GM12878 (cell line): ENCODE measurements at regions of chrX and their contacts with region 1.

Region 1: DNA sequence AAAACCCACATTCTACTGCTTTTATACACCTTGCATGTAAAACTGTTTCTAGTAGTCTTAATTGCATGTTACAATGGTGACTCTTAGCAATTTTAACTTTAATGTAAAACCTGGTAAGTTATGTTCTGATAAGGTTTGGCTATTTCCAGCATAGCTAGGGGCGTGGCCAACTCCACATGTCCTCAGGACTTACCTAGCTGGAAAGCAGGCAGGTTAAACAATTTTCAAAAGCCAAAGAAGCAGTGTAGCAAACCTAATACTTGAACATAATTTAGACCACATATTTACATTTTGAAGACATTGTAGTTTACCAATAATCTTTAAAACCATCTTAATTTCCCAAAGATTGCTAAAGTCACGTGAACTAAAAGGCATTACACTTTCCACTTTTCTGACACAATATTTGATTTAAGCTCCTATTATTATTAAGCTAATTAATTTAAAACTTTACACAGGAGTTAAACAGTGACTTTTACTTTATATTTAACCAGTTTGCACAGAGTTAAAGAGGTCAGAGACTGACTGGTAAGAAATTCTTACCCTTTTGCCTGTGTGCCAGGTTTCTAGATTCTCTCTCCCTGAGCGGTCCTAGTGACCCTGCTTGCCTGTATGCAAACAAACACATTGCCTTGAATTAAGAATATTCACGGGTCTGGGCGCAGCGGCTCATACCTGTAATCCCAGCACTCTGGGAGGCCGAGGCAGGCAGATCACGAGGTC is 88.2 kb downstream of the GLUD2 start:
- DNase-seq: no peak
- ATAC-seq: no peak
- H3K4me3 ChIP-seq: no peak overlapping the region
- H3K27ac ChIP-seq: no peak overlapping the region
- H3K4me1 ChIP-seq: no peaks in the 10 kb centered on the region
- H3K27me3 ChIP-seq: no peaks in the 10 kb centered on the region
- CTCF ChIP-seq: no peak
- EP300 ChIP-seq: no peak
- POLR2A ChIP-seq: no peak
- RAD21 ChIP-seq: no peak

Region 2: DNA sequence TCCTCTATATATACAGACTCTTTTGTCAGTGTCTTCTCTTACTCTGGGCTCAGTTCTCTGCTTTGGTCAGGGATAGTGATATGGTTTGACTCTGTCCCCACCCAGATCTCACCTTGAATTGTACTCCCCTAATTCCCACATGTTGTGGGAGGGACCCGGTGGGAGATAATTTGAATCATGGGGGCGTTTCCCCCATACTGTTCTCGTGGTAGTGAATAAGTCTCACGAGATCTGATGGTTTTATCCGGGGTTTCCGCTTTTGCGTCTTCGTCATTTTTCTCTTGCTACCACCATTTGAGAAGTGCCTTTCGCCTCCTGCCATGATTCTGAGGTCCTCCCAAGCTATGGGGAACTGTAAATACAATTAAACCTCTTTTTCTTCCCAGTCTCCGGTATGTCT is 56.1 kb after region 1 on chrX:
- CTCF ChIA-PET with region 1: no interaction called
- POLR2A ChIA-PET with region 1: no interaction called
- RAD21 ChIA-PET with region 1: no interaction called
- SMC1A ChIA-PET with region 1: no interaction called
- in situ Hi-C with region 1: no loop called
- intact Hi-C with region 1: loop called (anchors 10 kb)
- DNase-seq: no peak
- ATAC-seq: no peak
- H3K4me3 ChIP-seq: no peak overlapping the region
- H3K27ac ChIP-seq: no peak overlapping the region
- H3K4me1 ChIP-seq: no peaks in the 10 kb centered on the region
- H3K27me3 ChIP-seq: no peaks in the 10 kb centered on the region
- CTCF ChIP-seq: no peak
- EP300 ChIP-seq: no peak
- POLR2A ChIP-seq: no peak
- RAD21 ChIP-seq: no peak